ENCODE measurements at regions of chr1 and their contacts with region 1.

Region 1: GRCh38 chr1:107254299-107254698 is 113.5 kb downstream of the NTNG1 start:
- DNase-seq: no peak
- ATAC-seq: no peak
- H3K4me3 ChIP-seq: no peak overlapping the region
- H3K4me3 Mint-ChIP-seq: no peak overlapping the region
- H3K27ac ChIP-seq: no peak overlapping the region
- H3K27ac Mint-ChIP-seq: no peak overlapping the region
- H3K4me1 ChIP-seq: peaks cover 16 to 34% of the 10 kb centered on the region in 2 donors
- H3K4me1 Mint-ChIP-seq: peaks cover 43% of the 10 kb centered on the region
- H3K27me3 ChIP-seq: no peaks in the 10 kb centered on the region
- H3K27me3 Mint-ChIP-seq: no peaks in the 10 kb centered on the region
- CTCF ChIP-seq: no peak

Region 2: DNA sequence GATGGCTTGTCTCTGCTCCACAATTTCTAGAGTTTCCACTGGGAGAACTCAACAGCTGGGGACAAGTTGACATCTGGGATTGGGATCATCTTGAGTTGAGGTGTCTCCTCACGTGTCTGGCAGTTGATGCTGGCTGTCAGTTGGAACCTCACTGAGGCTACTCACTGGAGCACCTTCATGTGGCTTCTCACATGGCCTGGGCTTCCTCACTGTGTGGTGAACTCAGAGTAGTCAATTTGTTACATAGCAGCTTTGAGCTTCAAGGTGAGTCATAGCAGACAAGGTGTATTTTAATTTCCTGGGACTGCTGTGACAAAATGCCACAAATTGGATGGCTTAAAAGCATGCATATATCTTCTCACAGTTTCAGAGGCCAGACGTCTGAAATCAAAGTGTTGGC is 69.4 kb before region 1 on chr1:
- CTCF ChIA-PET with region 1: no interaction called
- POLR2A ChIA-PET with region 1: interaction called, 10 read pairs
- intact Hi-C with region 1: no loop called
- DNase-seq: no peak
- ATAC-seq: no peak
- H3K4me3 ChIP-seq: no peak overlapping the region
- H3K4me3 Mint-ChIP-seq: no peak overlapping the region
- H3K27ac ChIP-seq: no peak overlapping the region
- H3K27ac Mint-ChIP-seq: no peak overlapping the region
- H3K4me1 ChIP-seq: no peaks in the 10 kb centered on the region
- H3K4me1 Mint-ChIP-seq: no peaks in the 10 kb centered on the region
- H3K27me3 ChIP-seq: peaks cover 0 to under 1% (median 0%) of the 10 kb centered on the region in 4 experiments
- H3K27me3 Mint-ChIP-seq: no peaks in the 10 kb centered on the region
- CTCF ChIP-seq: no peak